ENCODE measurements at regions of chr14 and their contacts with region 1.

Region 1: DNA sequence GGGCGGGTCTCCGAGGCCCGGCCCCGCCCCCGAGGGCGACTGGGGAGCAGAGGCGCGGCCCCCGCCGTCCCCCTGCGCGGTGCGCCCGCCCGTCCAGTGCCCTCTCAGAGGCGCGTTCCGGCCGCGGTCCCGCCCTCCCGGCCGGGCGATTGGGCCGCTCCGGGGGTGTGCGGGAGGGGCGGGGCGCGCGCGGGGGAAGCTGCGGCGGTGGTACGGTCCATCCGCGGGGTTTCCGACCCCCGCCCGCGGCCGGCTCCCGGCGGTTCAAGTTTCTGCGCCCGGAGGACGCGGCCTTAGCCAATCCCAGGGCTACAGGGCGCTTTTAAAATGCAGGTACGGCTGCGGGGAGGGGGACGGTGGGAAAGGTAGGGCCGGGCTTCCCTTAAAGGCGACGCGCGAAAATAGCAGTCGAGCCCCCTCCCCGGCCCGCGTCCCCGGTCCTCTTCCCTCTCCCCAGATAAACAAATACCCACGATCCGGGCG is 317 bp upstream of the CCDC85C start:
- DNase-seq: peak; percentile 95
- H3K4me3 ChIP-seq: peak overlapping the region; percentile 68 to 89 (median 71)
- H3K27ac ChIP-seq: peak overlapping the region; percentile 77
- H3K4me1 ChIP-seq: peaks cover 36% of the 10 kb centered on the region
- H3K27me3 ChIP-seq: no peaks in the 10 kb centered on the region
- CTCF ChIP-seq: no peak

Region 2: DNA sequence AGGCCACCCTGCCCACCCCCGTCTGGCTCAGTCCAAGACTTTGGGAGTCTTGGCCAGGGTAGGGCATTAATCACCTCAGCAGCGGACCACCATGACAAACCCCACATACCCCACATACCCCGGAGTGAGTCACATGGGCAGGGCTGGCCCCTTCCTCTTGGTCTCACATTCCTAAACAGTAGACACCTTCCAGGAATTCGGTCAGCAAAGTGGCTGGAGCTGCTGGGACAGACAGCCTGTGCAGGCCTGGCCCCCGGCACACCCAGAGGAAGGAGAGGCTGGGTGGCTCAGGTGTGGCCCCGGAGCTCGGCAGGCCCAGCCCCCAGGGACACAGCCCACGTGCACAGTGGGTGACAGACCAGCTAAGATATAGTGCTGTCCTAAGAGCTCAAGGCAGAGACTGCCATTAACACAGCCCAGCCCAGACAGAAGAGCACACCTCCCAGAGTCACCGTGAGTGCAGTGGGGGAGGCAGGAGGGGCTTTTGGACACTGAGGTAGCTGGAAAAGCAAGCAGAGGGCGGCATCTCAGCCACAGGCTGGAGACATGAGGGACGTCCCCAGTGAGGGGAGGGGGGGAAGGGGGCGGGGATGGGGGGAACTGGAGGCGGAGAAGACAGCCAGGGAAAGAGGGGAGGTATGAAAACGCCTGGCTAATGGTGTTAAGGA is 24.3 kb before region 1 on chr14:
- CTCF ChIA-PET with region 1: no interaction called
- dilution Hi-C with region 1: no loop called
- in situ Hi-C with region 1: no loop called
- intact Hi-C with region 1: loop called (anchors 1 kb)
- DNase-seq: peak; percentile 63
- H3K4me3 ChIP-seq: peak overlapping the region in 2 of 3 experiments; percentile 12 to 26
- H3K27ac ChIP-seq: peak overlapping the region; percentile 85
- H3K4me1 ChIP-seq: peaks cover 53% of the 10 kb centered on the region
- H3K27me3 ChIP-seq: no peaks in the 10 kb centered on the region
- CTCF ChIP-seq: no peak